Psoas muscle (tissue), 8 donors: ENCODE measurements at regions of chr2 and their contacts with region 1.

Region 1: GRCh38 chr2:101205521-101205998 is 47.1 kb upstream of the CNOT11 start:
- DNase-seq: peak in 1 of 2 donors; percentile 26
- ATAC-seq: peak; percentile 73 to 92 (median 84)
- H3K4me3 ChIP-seq: peak overlapping the region; percentile 59
- H3K27ac ChIP-seq: no peak overlapping the region
- H3K4me1 ChIP-seq: peaks cover 4% of the 10 kb centered on the region
- H3K27me3 ChIP-seq: no peaks in the 10 kb centered on the region
- CTCF ChIP-seq: peak; percentile 50

Region 2: DNA sequence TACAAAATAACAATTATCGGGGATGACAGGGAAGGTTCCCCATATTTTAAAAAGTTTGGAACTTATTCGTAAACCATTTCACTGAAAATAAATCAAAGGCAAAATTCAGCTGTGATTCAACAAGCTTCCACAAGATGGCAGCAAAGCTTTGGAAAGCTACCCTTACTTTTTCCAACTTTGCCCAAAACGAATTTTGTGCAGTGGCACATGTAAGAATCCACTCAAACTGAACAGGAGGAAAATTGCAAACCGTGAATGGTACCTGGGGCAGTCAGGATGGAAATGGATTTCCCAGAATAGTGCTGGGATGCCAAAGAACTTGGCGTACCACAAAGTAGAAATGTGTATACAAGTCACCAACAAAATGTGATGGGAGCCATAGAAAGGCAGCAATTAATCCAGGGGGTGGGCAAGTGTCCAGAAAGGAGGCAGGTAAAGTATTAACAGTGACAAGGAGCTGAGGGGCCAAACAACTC is 192.8 kb before region 1 on chr2:
- intact Hi-C with region 1: loop called in 1 of 2 experiments (anchors 2 kb)
- DNase-seq: no peak
- ATAC-seq: peak in 3 of 4 donors; percentile 11 to 22 (median 18)
- H3K4me3 ChIP-seq: no peak overlapping the region
- H3K27ac ChIP-seq: no peak overlapping the region
- H3K4me1 ChIP-seq: peaks cover 4% of the 10 kb centered on the region
- H3K27me3 ChIP-seq: no peaks in the 10 kb centered on the region
- CTCF ChIP-seq: peak; percentile 88

Region 3: GRCh38 chr2:101036562-101037457 is 168.8 kb before region 1 on chr2:
- intact Hi-C with region 1: loop called in 1 of 2 experiments (anchors 5 kb)
- DNase-seq: no peak
- ATAC-seq: peak in 1 of 4 donors; percentile 3
- H3K4me3 ChIP-seq: no peak overlapping the region
- H3K27ac ChIP-seq: no peak overlapping the region
- H3K4me1 ChIP-seq: no peaks in the 10 kb centered on the region
- H3K27me3 ChIP-seq: no peaks in the 10 kb centered on the region
- CTCF ChIP-seq: peak; percentile 48